Activated T-helper 2 cell treated with anti-CD3 and anti-CD28 coated beads, Interferon-gamma antibody, Interleukin-2, Interleukin-4, amounts not matched to agents 10 μg/mL and 5 μg/mL and 100 μg/mL, durations not matched to agents 14 hours and 24 hours and 36 hours (primary cell): ENCODE measurements at regions of chr3 and their contacts with region 1.

Region 1: GRCh38 chr3:172750368-172751174 is at the start of gene ECT2:
- DNase-seq: peak; percentile 98
- H3K4me3 Mint-ChIP-seq: peak within 1 kb of the TSS; percentile 97
- H3K27ac Mint-ChIP-seq: peak within 1 kb of the TSS; percentile 95
- H3K4me1 Mint-ChIP-seq: peaks cover 31% of the 10 kb centered on the region
- H3K27me3 Mint-ChIP-seq: peaks cover 10% of the 10 kb centered on the region
- total RNA-seq, gene ECT2: 39.5 and 40.3 TPM in 2 replicates

Region 2: GRCh38 chr3:172673210-172673679 is 77.3 kb before region 1 on chr3:
- intact Hi-C with region 1: loop called (anchors 2 kb)
- DNase-seq: peak; percentile 60
- H3K4me3 Mint-ChIP-seq: no peak overlapping the region
- H3K27ac Mint-ChIP-seq: no peak overlapping the region
- H3K4me1 Mint-ChIP-seq: peaks cover 15% of the 10 kb centered on the region
- H3K27me3 Mint-ChIP-seq: no peaks in the 10 kb centered on the region

Region 3: DNA sequence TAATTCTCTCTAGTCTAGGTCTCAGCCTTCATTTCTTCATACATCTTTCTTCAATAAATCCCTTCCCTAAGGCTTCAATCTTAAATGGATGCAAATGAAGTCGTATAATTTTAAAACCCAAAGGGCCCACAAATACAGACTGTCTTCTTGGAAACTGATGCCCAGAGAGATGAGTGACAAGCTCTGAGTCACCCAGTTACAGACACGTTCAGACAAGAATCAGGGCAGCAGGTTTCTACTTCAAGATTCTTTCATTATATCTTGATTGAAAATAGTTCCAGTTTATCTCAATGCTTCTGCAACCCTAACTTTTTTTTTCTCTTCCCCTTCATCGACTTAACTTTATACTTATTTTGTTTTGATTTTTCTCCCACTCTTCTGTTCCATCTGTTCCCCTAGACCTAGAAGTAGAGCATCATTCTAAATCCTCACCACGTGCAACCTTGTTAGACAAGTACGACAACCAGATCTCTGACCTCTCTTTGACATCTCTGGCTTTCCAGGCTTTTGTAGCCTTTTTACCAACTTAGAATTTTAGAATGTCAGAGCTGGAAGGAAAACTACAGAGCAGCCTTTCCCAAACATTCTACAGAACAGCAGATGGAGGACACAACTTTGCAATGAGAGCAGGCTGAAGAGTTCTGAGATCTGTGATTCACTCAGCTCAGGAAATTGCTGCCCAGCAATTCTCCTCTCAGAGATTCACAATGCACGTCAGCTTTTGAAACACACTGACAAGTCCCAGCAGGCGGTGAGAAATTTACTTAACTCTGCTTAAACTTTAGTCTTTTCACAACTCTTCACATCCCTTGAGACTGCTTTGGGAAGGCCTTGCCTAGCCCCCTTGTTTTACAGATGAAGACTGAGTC is 65.0 kb before region 1 on chr3:
- intact Hi-C with region 1: loop called (anchors 5 kb)
- DNase-seq: no peak
- H3K4me3 Mint-ChIP-seq: peak overlapping the region; percentile 24
- H3K27ac Mint-ChIP-seq: peak overlapping the region; percentile 77
- H3K4me1 Mint-ChIP-seq: peaks cover 23% of the 10 kb centered on the region
- H3K27me3 Mint-ChIP-seq: no peaks in the 10 kb centered on the region